Activated B cell treated with CpG ODN at 0.5 μM for 24 hours (primary cell): ENCODE measurements at regions of chr2 and their contacts with region 1.

Region 1: GRCh38 chr2:30231212-30231995 is at the start of gene LBH:
- DNase-seq: peak; percentile 78
- ATAC-seq: peak; percentile 58
- H3K4me3 Mint-ChIP-seq: peak within 1 kb of the TSS; percentile 93
- H3K27ac Mint-ChIP-seq: peak within 1 kb of the TSS; percentile 94
- H3K4me1 Mint-ChIP-seq: peaks cover 52% of the 10 kb centered on the region
- H3K27me3 Mint-ChIP-seq: no peaks in the 10 kb centered on the region
- CTCF ChIP-seq: no peak
- total RNA-seq, gene LBH: 120 and 131 TPM in 2 replicates

Region 2: DNA sequence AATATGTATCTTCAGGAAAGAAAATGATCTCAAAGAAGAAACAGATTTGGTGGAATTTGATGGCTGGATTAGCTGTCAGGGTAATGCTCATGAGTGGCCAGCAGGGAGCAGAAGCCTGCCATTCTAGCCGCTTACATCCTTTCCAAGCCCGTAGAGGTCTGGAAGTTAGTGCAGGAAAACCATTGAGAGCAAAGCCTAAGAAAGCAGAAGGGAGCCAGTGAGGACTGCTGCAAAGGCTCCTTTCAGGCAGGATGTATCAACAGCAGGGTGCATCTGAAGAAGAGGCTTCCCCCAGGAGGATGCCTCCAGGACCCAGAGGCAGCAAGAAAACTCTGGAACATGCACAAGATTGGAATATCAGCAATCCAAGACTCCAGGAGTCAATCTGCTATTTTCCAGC is 23.0 kb before region 1 on chr2:
- CTCF ChIA-PET with region 1: interaction called, 90 read pairs
- POLR2A ChIA-PET with region 1: interaction called, 40 read pairs
- intact Hi-C with region 1: loop called (anchors 2 kb)
- DNase-seq: no peak
- ATAC-seq: peak; percentile 62
- H3K4me3 Mint-ChIP-seq: no peak overlapping the region
- H3K27ac Mint-ChIP-seq: peak overlapping the region; percentile 20
- H3K4me1 Mint-ChIP-seq: peaks cover 18% of the 10 kb centered on the region
- H3K27me3 Mint-ChIP-seq: no peaks in the 10 kb centered on the region
- CTCF ChIP-seq: peak; percentile 82

Region 3: DNA sequence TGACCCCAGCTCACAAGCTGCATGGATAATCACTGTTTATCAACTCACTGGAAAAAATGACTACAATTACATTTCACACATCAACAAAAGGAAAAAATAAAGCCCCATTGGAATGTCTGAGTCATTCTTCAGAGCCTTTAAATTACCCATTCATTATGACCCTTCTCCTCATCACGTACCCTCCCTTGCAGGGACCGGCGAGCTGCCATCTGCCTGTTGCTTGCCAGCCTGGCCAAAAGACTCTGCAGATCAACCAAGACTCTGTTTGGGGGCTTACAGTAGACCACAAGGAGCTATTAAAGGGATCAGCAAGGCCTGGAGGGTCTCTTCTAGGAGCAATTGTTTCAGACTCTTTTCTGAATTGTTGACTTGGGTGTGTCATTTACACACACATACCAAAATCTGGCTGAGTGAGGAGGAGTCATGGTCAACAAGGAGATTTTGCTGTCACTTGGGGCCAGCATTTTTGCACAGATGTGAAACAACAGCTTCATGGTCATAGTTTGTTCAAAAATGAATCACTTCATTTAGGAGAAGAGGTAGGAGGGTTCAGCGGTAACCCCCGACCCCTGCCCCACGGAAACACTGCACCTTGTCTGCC is 42.0 kb after region 1 on chr2:
- CTCF ChIA-PET with region 1: interaction called, 4 read pairs
- POLR2A ChIA-PET with region 1: interaction called, 20 read pairs
- intact Hi-C with region 1: loop called (anchors 1 kb)
- DNase-seq: no peak
- ATAC-seq: no peak
- H3K4me3 Mint-ChIP-seq: no peak overlapping the region
- H3K27ac Mint-ChIP-seq: peak overlapping the region; percentile 72
- H3K4me1 Mint-ChIP-seq: peaks cover 93% of the 10 kb centered on the region
- H3K27me3 Mint-ChIP-seq: no peaks in the 10 kb centered on the region
- CTCF ChIP-seq: no peak

Region 4: DNA sequence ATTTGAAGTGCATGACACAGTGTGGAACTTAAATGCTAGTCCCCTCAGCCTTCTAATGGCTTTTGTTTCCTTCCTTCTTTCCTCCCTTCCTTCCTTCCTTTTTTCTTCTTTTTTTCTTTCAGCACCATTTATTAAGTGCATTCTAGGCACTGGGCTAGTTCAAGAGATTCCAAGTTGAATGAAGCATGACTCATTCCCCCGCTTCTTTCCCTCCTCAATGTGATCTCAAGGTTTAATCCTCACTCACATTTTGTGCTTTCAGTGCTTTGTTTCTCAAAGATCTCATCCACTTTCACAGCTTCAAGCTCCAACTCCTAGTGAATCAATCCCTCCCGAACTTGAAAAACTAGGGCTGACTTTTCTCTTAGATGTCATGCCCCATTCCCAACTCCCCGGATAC is 90.1 kb after region 1 on chr2:
- CTCF ChIA-PET with region 1: interaction called, 3 read pairs
- POLR2A ChIA-PET with region 1: interaction called, 35 read pairs
- intact Hi-C with region 1: no loop called
- DNase-seq: no peak
- ATAC-seq: no peak
- H3K4me3 Mint-ChIP-seq: no peak overlapping the region
- H3K27ac Mint-ChIP-seq: no peak overlapping the region
- H3K4me1 Mint-ChIP-seq: peaks cover 47% of the 10 kb centered on the region
- H3K27me3 Mint-ChIP-seq: no peaks in the 10 kb centered on the region
- CTCF ChIP-seq: no peak

Region 5: DNA sequence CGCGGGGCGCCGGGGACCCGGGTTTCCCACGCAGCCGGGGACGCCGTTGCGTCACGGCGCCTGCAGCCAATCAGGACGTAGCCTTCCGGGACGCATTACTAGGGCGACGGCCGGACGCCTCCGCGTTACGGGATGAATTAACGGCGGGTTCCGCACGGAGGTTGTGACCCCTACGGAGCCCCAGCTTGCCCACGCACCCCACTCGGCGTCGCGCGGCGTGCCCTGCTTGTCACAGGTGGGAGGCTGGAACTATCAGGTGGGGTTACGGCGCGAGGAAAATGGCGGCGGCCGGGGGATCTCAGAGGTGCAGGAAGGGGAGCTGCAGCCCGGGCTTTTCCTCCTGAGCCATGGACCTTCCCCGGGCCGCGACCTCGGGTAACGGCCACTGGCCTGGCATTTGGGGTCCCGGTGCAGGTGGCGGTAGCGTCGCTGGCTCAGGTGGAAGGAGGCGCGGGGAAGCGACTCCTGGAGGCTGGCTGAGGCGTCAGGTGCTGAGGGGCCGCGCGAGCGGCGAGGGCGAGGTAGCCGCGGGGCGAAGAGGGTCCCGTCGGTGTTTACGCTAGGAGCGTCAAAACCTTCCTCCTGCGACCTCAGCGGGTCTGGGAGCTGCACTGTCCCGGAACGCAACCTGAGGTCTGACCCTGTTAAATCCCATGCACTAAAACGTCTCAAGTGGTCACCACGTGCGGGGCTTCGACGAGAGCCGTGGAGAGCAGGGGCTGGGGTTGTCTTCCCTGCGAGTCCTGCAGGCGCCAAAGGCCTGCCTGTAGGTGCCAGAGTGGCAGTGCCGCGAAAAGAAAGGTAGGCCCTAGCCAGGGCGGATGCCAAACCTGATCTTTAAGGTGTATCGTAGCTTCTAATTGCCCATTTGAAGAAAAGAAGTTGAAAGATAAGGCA is 216.0 kb after region 1 on chr2 and contains the start of gene LCLAT1:
- CTCF ChIA-PET with region 1: interaction called, 7 read pairs
- POLR2A ChIA-PET with region 1: interaction called, 27 read pairs
- intact Hi-C with region 1: loop called (anchors 1 kb)
- DNase-seq: peak; percentile 80
- ATAC-seq: peak; percentile 94
- H3K4me3 Mint-ChIP-seq: peak within 1 kb of the TSS; percentile 96
- H3K27ac Mint-ChIP-seq: peak within 1 kb of the TSS; percentile 95
- H3K4me1 Mint-ChIP-seq: peaks cover 25% of the 10 kb centered on the region
- H3K27me3 Mint-ChIP-seq: no peaks in the 10 kb centered on the region
- CTCF ChIP-seq: no peak
- total RNA-seq, gene LCLAT1: 20.1 and 25.9 TPM in 2 replicates

Region 6: DNA sequence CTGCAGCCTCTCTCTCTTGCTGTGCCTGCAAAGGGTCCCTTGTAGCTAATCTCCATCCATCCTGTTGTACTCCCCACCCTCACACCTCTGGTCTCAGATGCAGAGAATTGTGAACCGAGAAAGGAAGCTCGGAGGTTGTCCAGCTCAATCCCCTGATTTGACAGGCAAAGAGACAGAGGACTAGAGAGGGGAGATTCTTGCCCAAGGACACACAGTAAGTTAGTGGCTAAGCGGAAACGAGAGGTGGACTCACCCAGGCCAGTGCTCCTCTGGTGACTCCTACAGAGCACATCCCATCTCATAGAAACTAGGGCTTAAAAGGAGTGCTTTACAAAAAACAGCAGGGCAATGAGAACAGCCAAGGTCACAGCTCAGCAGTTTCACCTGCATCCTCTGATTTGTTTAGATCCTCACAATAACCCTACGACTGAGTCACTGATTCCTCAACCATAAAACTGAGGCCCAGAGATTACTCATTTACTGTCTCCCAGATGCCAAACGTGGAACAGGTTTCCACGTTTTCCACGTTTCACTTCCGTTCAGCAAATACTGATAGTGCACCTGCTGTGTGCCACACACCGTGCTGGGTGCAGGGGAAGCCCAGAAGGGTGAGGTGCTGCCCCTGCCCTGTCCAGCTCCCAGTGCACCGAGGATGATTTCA is 1024.6 kb after region 1 on chr2:
- CTCF ChIA-PET with region 1: no interaction called
- POLR2A ChIA-PET with region 1: interaction called, 5 read pairs
- intact Hi-C with region 1: loop called (anchors 5 kb)
- DNase-seq: peak; percentile 58
- ATAC-seq: peak; percentile 70
- H3K4me3 Mint-ChIP-seq: peak overlapping the region; percentile 72
- H3K27ac Mint-ChIP-seq: peak overlapping the region; percentile 84
- H3K4me1 Mint-ChIP-seq: peaks cover 85% of the 10 kb centered on the region
- H3K27me3 Mint-ChIP-seq: no peaks in the 10 kb centered on the region
- CTCF ChIP-seq: no peak